ENCODE measurements at regions of chr21 and their contacts with region 1.

Region 1: GRCh38 chr21:42097860-42098454 is 26.8 kb downstream of the UMODL1 start:
- DNase-seq: peak; percentile 82 to 93
- H3K4me3 ChIP-seq: peak overlapping the region in 1 of 2 donors; percentile 5
- H3K27ac ChIP-seq: peak overlapping the region; percentile 87 to 91
- H3K4me1 ChIP-seq: peaks cover 21 to 45% of the 10 kb centered on the region in 2 donors
- H3K27me3 ChIP-seq: no peaks in the 10 kb centered on the region
- CTCF ChIP-seq: no peak

Region 2: GRCh38 chr21:41247561-41248284 is 850.2 kb before region 1 on chr21:
- intact Hi-C with region 1: loop called (anchors 5 kb)
- DNase-seq: peak; percentile 78 to 94
- H3K4me3 ChIP-seq: peak overlapping the region; percentile 36 to 45
- H3K27ac ChIP-seq: peak overlapping the region; percentile 85 to 92
- H3K4me1 ChIP-seq: peaks cover 25 to 43% of the 10 kb centered on the region in 2 donors
- H3K27me3 ChIP-seq: no peaks in the 10 kb centered on the region
- CTCF ChIP-seq: no peak

Region 3: DNA sequence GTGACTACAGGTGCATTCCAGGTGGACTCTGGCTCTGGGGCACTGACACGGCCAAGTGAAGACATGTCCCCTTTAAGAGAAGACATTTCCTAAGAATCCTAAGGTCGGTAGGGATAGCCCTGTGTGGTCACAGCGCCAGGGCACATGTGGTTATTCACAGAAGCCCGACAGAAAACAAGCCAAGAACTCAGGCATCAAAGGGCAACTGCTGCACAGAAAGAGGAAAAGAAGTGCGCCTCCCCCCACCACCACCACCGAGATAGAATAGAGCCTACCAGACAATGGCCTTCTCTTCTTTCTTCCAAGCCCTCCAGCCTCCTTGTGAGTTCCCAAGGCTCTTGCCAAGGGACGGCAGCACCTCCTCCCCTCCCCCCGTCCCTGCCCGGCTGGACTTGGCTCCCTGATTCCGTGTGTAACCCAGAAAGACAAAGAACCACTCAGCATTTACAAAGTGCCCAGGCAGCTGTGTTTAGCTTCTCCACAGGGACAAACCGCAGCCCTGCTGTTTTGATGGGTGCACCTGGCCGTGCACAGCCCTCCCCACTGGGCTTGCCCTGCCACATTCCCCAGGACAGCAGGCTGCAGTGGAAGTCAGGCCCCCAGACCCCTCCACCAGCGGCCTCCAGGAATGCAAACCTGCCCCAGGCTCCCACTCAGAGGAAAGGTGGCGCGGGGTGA is 620.2 kb before region 1 on chr21:
- intact Hi-C with region 1: no loop called
- DNase-seq: no peak
- H3K4me3 ChIP-seq: no peak overlapping the region
- H3K27ac ChIP-seq: no peak overlapping the region
- H3K4me1 ChIP-seq: no peaks in the 10 kb centered on the region
- H3K27me3 ChIP-seq: no peaks in the 10 kb centered on the region
- CTCF ChIP-seq: no peak

Region 4: GRCh38 chr21:41926117-41926806 is 171.7 kb before region 1 on chr21:
- intact Hi-C with region 1: loop called (anchors 10 kb)
- DNase-seq: no peak
- H3K4me3 ChIP-seq: peak overlapping the region; percentile 39 to 58
- H3K27ac ChIP-seq: peak overlapping the region; percentile 92 to 97
- H3K4me1 ChIP-seq: peaks cover 12 to 35% of the 10 kb centered on the region in 2 donors
- H3K27me3 ChIP-seq: no peaks in the 10 kb centered on the region
- CTCF ChIP-seq: no peak

Region 5: DNA sequence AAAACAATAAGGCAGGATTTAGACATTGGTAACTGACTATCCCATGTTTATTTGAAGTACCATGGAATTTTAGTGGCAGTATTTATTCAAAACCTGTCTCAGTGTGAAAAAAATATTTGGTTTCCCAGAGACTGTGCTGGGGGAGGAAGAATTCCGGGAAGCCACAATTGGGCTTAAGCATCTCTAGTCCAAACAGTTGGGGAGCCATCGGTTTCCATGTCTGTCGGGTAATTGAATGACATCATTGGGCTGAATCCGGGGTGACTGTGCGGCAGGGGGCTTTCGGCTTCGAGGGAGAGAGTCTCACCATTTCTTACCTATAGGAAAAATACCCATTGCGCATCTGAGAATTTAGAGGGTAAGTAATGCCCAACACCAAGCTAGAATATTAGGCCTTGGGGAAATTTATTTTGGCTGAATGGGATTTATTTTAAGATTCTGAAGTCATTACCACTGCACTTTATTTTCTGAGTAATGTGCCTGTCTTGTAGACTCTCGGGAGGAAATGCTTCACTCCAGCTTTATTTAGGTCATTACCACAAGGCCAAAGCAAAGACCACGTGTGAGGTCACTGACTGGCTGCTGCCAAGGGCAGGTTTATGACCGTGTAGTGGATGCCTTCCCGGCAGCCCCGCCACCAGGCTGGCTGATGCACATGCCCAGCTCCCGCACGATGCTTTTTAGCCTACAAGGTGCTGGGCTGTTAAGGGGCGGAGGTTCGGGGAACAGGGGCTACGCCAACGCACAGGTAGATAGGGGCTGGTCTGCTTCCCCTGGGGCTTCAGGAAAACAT is 49.9 kb before region 1 on chr21:
- intact Hi-C with region 1: loop called (anchors 1 kb)
- DNase-seq: peak; percentile 80 to 96
- H3K4me3 ChIP-seq: no peak overlapping the region
- H3K27ac ChIP-seq: peak overlapping the region; percentile 88 to 90
- H3K4me1 ChIP-seq: peaks cover 4 to 20% of the 10 kb centered on the region in 2 donors
- H3K27me3 ChIP-seq: no peaks in the 10 kb centered on the region
- CTCF ChIP-seq: peak in 2 of 3 experiments; percentile 8 to 27

Measured in ascending aorta (tissue), 2 donors.